ENCODE measurements at regions of chr20 and their contacts with region 1.

Region 1: GRCh38 chr20:34768096-34768495 is 57.4 kb downstream of the NCOA6 start:
- DNase-seq: no peak
- ATAC-seq: no peak
- H3K4me3 ChIP-seq: no peak overlapping the region
- H3K27ac ChIP-seq: no peak overlapping the region
- H3K4me1 ChIP-seq: no peaks in the 10 kb centered on the region; the same call in 1 of the 2 replicates
- H3K27me3 ChIP-seq: no peaks in the 10 kb centered on the region
- CTCF ChIP-seq: no peak
- EP300 ChIP-seq: no peak
- POLR2A ChIP-seq: no peak
- RAD21 ChIP-seq: no peak

Region 2: DNA sequence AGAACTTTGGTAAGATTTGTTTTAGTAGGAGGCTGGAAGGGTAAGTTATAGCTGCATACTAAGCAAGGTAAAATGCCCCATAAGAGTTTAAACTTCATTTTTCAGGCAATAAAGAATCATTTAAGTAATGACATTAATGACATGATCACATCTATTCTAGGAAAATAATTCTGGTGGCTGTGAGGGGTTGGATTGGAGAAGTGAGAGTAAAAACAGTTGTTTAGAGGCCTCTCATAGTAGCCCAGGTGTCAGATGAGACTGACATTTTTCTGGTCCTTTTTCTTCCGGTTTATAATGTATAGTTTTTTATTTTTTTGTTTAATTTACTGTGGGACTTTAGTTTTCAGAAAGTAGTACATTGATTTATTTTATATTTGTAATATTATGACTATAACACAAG is 364.2 kb before region 1 on chr20:
- CTCF ChIA-PET with region 1: no interaction called
- POLR2A ChIA-PET with region 1: no interaction called
- RAD21 ChIA-PET with region 1: no interaction called
- SMC1A ChIA-PET with region 1: no interaction called
- in situ Hi-C with region 1: no loop called
- intact Hi-C with region 1: no loop called
- DNase-seq: no peak
- ATAC-seq: peak; percentile 81
- H3K4me3 ChIP-seq: peak overlapping the region; percentile 6; the same call in 1 of the 2 replicates
- H3K27ac ChIP-seq: peak overlapping the region; percentile 76
- H3K4me1 ChIP-seq: peaks cover 30% of the 10 kb centered on the region
- H3K27me3 ChIP-seq: no peaks in the 10 kb centered on the region
- CTCF ChIP-seq: no peak
- EP300 ChIP-seq: no peak
- POLR2A ChIP-seq: no peak
- RAD21 ChIP-seq: no peak

Region 3: GRCh38 chr20:34532406-34532719 is 235.7 kb before region 1 on chr20:
- CTCF ChIA-PET with region 1: interaction called, 13 read pairs
- POLR2A ChIA-PET with region 1: no interaction called
- RAD21 ChIA-PET with region 1: interaction called, 35 read pairs
- SMC1A ChIA-PET with region 1: interaction called, 3 read pairs
- in situ Hi-C with region 1: loop called (anchors 5 kb)
- intact Hi-C with region 1: loop called (anchors 5 kb)
- DNase-seq: no peak
- ATAC-seq: no peak
- H3K4me3 ChIP-seq: no peak overlapping the region
- H3K27ac ChIP-seq: no peak overlapping the region
- H3K4me1 ChIP-seq: no peaks in the 10 kb centered on the region
- H3K27me3 ChIP-seq: no peaks in the 10 kb centered on the region
- CTCF ChIP-seq: no peak
- EP300 ChIP-seq: no peak
- POLR2A ChIP-seq: no peak
- RAD21 ChIP-seq: no peak

Region 4: GRCh38 chr20:34558320-34559218 is 209.5 kb before region 1 on chr20 and contains the start of gene MAP1LC3A:
- CTCF ChIA-PET with region 1: interaction called, 29 read pairs
- POLR2A ChIA-PET with region 1: no interaction called
- RAD21 ChIA-PET with region 1: interaction called, 12 read pairs
- SMC1A ChIA-PET with region 1: interaction called, 10 read pairs
- in situ Hi-C with region 1: no loop called
- intact Hi-C with region 1: no loop called
- DNase-seq: no peak
- ATAC-seq: peak; percentile 85
- H3K4me3 ChIP-seq: peak within 1 kb of the TSS; percentile 61
- H3K27ac ChIP-seq: 0 out of 2 replicates have a peak within 1 kb of the TSS, but pooled peaks have one; percentile 22
- H3K4me1 ChIP-seq: no peaks in the 10 kb centered on the region
- H3K27me3 ChIP-seq: no peaks in the 10 kb centered on the region
- CTCF ChIP-seq: no peak
- EP300 ChIP-seq: no peak
- POLR2A ChIP-seq: peak; percentile 57
- RAD21 ChIP-seq: no peak
- polyA plus RNA-seq, gene MAP1LC3A: not detected

Region 5: GRCh38 chr20:34704177-34705007 is 63.7 kb before region 1 on chr20 and contains the start of gene TP53INP2:
- CTCF ChIA-PET with region 1: interaction called, 118 read pairs
- POLR2A ChIA-PET with region 1: interaction called, 5 read pairs
- RAD21 ChIA-PET with region 1: interaction called, 112 read pairs
- SMC1A ChIA-PET with region 1: interaction called, 146 read pairs
- in situ Hi-C with region 1: no loop called
- intact Hi-C with region 1: no loop called
- DNase-seq: no peak
- ATAC-seq: peak; percentile 66
- H3K4me3 ChIP-seq: peak within 1 kb of the TSS; percentile 96
- H3K27ac ChIP-seq: peak within 1 kb of the TSS; percentile 70
- H3K4me1 ChIP-seq: peaks cover 3% of the 10 kb centered on the region; the same call in 1 of the 2 replicates
- H3K27me3 ChIP-seq: no peaks in the 10 kb centered on the region
- CTCF ChIP-seq: no peak
- EP300 ChIP-seq: no peak
- POLR2A ChIP-seq: peak; percentile 66
- RAD21 ChIP-seq: no peak
- polyA plus RNA-seq, gene TP53INP2: 2.8 to 3.7 TPM

Region 6: GRCh38 chr20:34720266-34720665 is 47.8 kb before region 1 on chr20:
- CTCF ChIA-PET with region 1: interaction called, 31 read pairs
- POLR2A ChIA-PET with region 1: no interaction called
- RAD21 ChIA-PET with region 1: interaction called, 24 read pairs
- SMC1A ChIA-PET with region 1: interaction called, 146 read pairs
- in situ Hi-C with region 1: no loop called
- intact Hi-C with region 1: no loop called
- DNase-seq: no peak
- ATAC-seq: peak; percentile 49
- H3K4me3 ChIP-seq: no peak overlapping the region; the same call in 1 of the 2 replicates
- H3K27ac ChIP-seq: peak overlapping the region; percentile 79
- H3K4me1 ChIP-seq: peaks cover 37% of the 10 kb centered on the region
- H3K27me3 ChIP-seq: no peaks in the 10 kb centered on the region
- CTCF ChIP-seq: no peak
- EP300 ChIP-seq: no peak
- POLR2A ChIP-seq: no peak
- RAD21 ChIP-seq: no peak

Region 7: GRCh38 chr20:34753706-34754461 is 14.2 kb before region 1 on chr20:
- CTCF ChIA-PET with region 1: interaction called, 58 read pairs
- POLR2A ChIA-PET with region 1: interaction called, 4 read pairs
- RAD21 ChIA-PET with region 1: interaction called, 9 read pairs
- SMC1A ChIA-PET with region 1: interaction called, 24 read pairs
- in situ Hi-C with region 1: no loop called
- intact Hi-C with region 1: no loop called
- DNase-seq: no peak
- ATAC-seq: no peak
- H3K4me3 ChIP-seq: no peak overlapping the region
- H3K27ac ChIP-seq: peak overlapping the region; percentile 73
- H3K4me1 ChIP-seq: peaks cover 24% of the 10 kb centered on the region
- H3K27me3 ChIP-seq: no peaks in the 10 kb centered on the region
- CTCF ChIP-seq: peak; percentile 18 to 28 (median 20); a peak in 3 of 6 replicates
- EP300 ChIP-seq: no peak
- POLR2A ChIP-seq: no peak
- RAD21 ChIP-seq: peak; percentile 50

Region 8: GRCh38 chr20:34904202-34904621 is 136.1 kb after region 1 on chr20:
- CTCF ChIA-PET with region 1: no interaction called
- POLR2A ChIA-PET with region 1: no interaction called
- RAD21 ChIA-PET with region 1: no interaction called
- SMC1A ChIA-PET with region 1: no interaction called
- in situ Hi-C with region 1: no loop called
- intact Hi-C with region 1: no loop called
- DNase-seq: no peak
- ATAC-seq: peak; percentile 80
- H3K4me3 ChIP-seq: no peak overlapping the region
- H3K27ac ChIP-seq: no peak overlapping the region
- H3K4me1 ChIP-seq: no peaks in the 10 kb centered on the region
- H3K27me3 ChIP-seq: no peaks in the 10 kb centered on the region
- CTCF ChIP-seq: no peak
- EP300 ChIP-seq: no peak
- POLR2A ChIP-seq: no peak
- RAD21 ChIP-seq: no peak

Region 9: GRCh38 chr20:35363190-35363589 is 595.1 kb after region 1 on chr20:
- CTCF ChIA-PET with region 1: no interaction called
- POLR2A ChIA-PET with region 1: no interaction called
- RAD21 ChIA-PET with region 1: no interaction called
- SMC1A ChIA-PET with region 1: no interaction called
- in situ Hi-C with region 1: no loop called
- intact Hi-C with region 1: no loop called
- DNase-seq: no peak
- ATAC-seq: no peak
- H3K4me3 ChIP-seq: no peak overlapping the region
- H3K27ac ChIP-seq: no peak overlapping the region
- H3K4me1 ChIP-seq: no peaks in the 10 kb centered on the region
- H3K27me3 ChIP-seq: no peaks in the 10 kb centered on the region
- CTCF ChIP-seq: no peak
- EP300 ChIP-seq: no peak
- POLR2A ChIP-seq: no peak
- RAD21 ChIP-seq: no peak